ENCODE measurements at regions of chr13 and their contacts with region 1.

Region 1: GRCh38 chr13:49858183-49858856 is 65.8 kb upstream of the KPNA3 start:
- DNase-seq: peak; percentile 84
- H3K4me3 Mint-ChIP-seq: peak overlapping the region; percentile 50
- H3K27ac Mint-ChIP-seq: peak overlapping the region; percentile 91
- H3K4me1 Mint-ChIP-seq: peaks cover 19% of the 10 kb centered on the region
- H3K27me3 Mint-ChIP-seq: no peaks in the 10 kb centered on the region
- CTCF ChIP-seq: no peak

Region 2: GRCh38 chr13:49908637-49909036 is 50.3 kb after region 1 on chr13:
- CTCF ChIA-PET with region 1: interaction called, 7 read pairs
- POLR2A ChIA-PET with region 1: interaction called, 3 read pairs
- intact Hi-C with region 1: loop called (anchors 2 kb)
- DNase-seq: no peak
- H3K4me3 Mint-ChIP-seq: no peak overlapping the region
- H3K27ac Mint-ChIP-seq: no peak overlapping the region
- H3K4me1 Mint-ChIP-seq: no peaks in the 10 kb centered on the region
- H3K27me3 Mint-ChIP-seq: no peaks in the 10 kb centered on the region
- CTCF ChIP-seq: no peak

Region 3: GRCh38 chr13:50410921-50411712 is 552.8 kb after region 1 on chr13:
- CTCF ChIA-PET with region 1: no interaction called
- POLR2A ChIA-PET with region 1: no interaction called
- intact Hi-C with region 1: no loop called
- DNase-seq: peak; percentile 80
- H3K4me3 Mint-ChIP-seq: peak overlapping the region; percentile 33
- H3K27ac Mint-ChIP-seq: peak overlapping the region; percentile 85
- H3K4me1 Mint-ChIP-seq: peaks cover 14% of the 10 kb centered on the region
- H3K27me3 Mint-ChIP-seq: no peaks in the 10 kb centered on the region
- CTCF ChIP-seq: no peak